Activated naive CD4-positive, alpha-beta T cell treated with anti-CD3 and anti-CD28 coated beads for 36 hours (primary cell): ENCODE measurements at regions of chr10 and their contacts with region 1.

Region 1: GRCh38 chr10:67788025-67788886 is 49.7 kb downstream of the DNAJC12 start:
- DNase-seq: peak; percentile 92
- H3K4me3 Mint-ChIP-seq: no peak overlapping the region
- H3K27ac Mint-ChIP-seq: peak overlapping the region; percentile 57
- H3K4me1 Mint-ChIP-seq: peaks cover 43% of the 10 kb centered on the region
- H3K27me3 Mint-ChIP-seq: peaks cover 2% of the 10 kb centered on the region

Region 2: DNA sequence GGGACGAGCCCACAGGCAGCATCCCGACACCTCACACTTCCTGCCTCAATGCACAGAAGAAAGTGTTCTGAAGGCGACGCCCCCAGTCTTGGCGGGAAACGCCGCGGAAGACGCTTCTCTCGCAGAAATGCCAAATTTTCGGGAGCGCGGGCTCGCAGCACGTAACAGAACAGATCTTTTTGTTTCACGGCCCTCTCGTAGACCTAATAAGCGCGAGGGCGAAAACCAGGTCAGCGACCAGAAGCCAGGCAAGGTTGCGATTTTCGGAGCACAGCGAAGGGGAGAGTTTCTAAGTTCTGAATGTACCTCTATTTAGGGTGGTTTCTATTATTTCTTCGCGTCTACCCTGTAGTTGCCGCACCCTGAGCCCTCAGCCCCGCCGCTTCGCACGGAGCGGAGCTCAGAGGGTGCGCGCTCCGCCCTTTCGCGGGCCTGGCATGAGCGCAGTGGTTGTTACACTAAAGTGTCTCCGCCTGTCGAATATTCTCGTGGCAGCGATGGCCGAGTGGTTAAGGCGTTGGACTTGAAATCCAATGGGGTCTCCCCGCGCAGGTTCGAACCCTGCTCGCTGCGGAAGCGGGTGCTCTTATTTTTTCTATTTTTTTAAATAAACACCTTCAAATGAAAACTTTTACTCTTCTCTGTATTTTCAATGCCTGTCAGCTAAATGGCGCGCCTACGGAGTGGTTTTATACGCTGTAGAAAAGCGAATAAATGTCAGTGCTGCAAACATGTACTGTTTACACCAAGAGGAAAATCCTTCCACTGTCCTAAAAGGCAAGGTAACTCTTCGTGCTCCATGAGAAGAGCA is 24.0 kb before region 1 on chr10:
- CTCF ChIA-PET with region 1: interaction called, 6 read pairs
- intact Hi-C with region 1: loop called (anchors 1 kb)
- DNase-seq: peak; percentile 97
- H3K4me3 Mint-ChIP-seq: peak overlapping the region; percentile 93
- H3K27ac Mint-ChIP-seq: peak overlapping the region; percentile 99
- H3K4me1 Mint-ChIP-seq: peaks cover 4% of the 10 kb centered on the region
- H3K27me3 Mint-ChIP-seq: peaks cover 5% of the 10 kb centered on the region

Region 3: GRCh38 chr10:67815571-67816059 is 27.4 kb after region 1 on chr10:
- CTCF ChIA-PET with region 1: interaction called, 8 read pairs
- intact Hi-C with region 1: loop called (anchors 1 kb)
- DNase-seq: no peak
- H3K4me3 Mint-ChIP-seq: no peak overlapping the region
- H3K27ac Mint-ChIP-seq: peak overlapping the region; percentile 84
- H3K4me1 Mint-ChIP-seq: peaks cover 16% of the 10 kb centered on the region
- H3K27me3 Mint-ChIP-seq: peaks cover 6% of the 10 kb centered on the region

Region 4: DNA sequence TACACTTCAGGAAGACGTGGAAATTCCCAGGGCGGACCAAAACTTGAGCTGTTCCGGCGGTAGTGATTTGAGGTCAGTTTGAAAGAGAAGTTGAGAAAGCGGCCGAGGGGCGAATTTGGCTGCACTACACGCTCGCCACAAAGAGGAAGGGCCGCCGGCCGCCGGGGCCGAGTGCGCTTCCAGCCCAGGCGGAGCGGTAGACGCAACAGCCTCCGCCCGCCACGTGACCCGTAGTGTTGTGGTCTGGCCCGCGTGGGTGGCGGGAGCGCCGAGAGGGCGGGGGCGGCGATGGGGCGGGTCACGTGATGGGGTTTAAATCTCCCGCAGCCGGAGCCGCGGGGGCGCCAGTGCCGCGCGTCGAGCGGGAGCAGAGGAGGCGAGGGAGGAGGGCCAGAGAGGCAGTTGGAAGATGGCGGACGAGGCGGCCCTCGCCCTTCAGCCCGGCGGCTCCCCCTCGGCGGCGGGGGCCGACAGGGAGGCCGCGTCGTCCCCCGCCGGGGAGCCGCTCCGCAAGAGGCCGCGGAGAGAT is 96.1 kb after region 1 on chr10 and contains the start of gene SIRT1:
- CTCF ChIA-PET with region 1: interaction called, 31 read pairs
- intact Hi-C with region 1: loop called (anchors 1 kb)
- DNase-seq: peak; percentile 88
- H3K4me3 Mint-ChIP-seq: peak within 1 kb of the TSS; percentile 90
- H3K27ac Mint-ChIP-seq: peak within 1 kb of the TSS; percentile 89
- H3K4me1 Mint-ChIP-seq: peaks cover 25% of the 10 kb centered on the region
- H3K27me3 Mint-ChIP-seq: no peaks in the 10 kb centered on the region
- total RNA-seq, gene SIRT1: 18.7 to 18.8 TPM

Region 5: DNA sequence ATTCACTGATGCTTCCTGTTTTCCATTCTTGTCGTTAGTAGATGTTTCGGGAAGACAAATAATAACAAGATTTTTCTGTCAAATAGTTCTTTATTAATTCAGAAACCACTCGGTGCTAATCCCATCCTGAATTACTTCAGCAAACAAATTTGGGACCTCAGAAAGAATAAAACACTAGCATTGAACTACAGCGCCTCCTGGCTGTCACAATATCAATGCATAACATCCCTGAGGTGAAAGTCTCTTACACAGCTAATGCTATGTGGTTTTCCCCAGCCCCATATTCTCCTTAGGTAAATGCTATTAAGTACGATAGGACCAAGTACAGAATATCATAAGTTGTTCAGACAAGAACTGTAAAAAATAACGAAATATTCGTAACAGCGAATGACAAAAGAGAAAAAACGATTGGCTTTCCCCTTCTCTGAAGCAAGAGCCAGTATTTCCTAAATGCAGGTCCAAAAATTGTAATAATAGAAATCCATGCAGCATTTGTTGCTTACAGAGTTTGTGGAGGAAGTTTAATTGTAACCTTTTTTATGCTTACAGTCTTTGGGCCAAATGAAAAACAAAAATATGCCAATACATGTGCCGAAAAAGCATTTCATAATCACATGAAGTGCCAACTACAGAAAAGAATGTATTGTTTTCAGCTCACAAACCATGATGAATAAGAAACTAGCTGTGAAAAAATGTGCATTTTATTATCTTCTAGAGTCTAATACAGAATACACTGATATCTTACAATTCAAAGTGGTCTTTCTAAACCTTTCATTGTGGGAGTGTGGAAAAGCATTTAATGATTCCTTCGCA is 368.3 kb after region 1 on chr10:
- CTCF ChIA-PET with region 1: interaction called, 93 read pairs
- intact Hi-C with region 1: loop called (anchors 1 kb)
- DNase-seq: peak; percentile 83
- H3K4me3 Mint-ChIP-seq: no peak overlapping the region
- H3K27ac Mint-ChIP-seq: no peak overlapping the region
- H3K4me1 Mint-ChIP-seq: peaks cover 2% of the 10 kb centered on the region
- H3K27me3 Mint-ChIP-seq: peaks cover 3% of the 10 kb centered on the region

Region 6: DNA sequence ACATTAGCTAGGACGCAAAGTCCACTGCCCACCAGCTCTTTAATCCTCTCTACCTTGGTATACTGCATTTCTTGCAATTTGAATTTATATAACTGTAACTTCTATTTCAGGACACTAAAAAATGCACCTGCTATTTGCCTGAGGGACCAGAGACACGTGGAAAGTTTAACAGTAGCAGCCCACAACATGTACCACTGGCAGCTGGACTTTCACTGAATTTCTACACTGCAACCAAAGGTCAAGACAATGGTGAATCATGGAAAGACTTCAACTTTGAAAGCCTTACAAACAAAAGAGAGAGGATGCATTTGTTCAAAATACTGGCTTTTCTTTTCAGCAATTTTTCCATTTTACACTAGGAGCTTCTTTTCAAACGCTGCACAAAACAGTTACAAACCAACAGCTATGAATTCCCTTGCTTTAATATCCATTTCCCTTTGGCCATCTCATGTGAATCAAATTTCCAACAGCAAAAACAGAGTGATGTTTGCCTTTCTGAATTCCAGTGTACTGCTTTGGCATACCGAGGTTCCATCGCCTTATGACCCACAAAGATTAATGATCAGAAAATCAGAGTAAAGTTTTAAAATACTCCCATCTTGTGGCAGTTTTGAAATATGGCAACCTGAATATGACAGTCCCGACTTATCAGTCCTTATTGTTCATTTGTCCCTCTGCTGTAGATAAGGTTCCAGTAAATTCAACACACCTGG is 513.7 kb after region 1 on chr10:
- CTCF ChIA-PET with region 1: interaction called, 14 read pairs
- intact Hi-C with region 1: loop called (anchors 1 kb)
- DNase-seq: no peak
- H3K4me3 Mint-ChIP-seq: no peak overlapping the region
- H3K27ac Mint-ChIP-seq: no peak overlapping the region
- H3K4me1 Mint-ChIP-seq: no peaks in the 10 kb centered on the region
- H3K27me3 Mint-ChIP-seq: no peaks in the 10 kb centered on the region